GM10248 (cell line): ENCODE measurements at regions of chr12 and their contacts with region 1.

Region 1: GRCh38 chr12:105382771-105383622 is 52.5 kb downstream of the C12orf75 start:
- DNase-seq: peak; percentile 67
- CTCF ChIP-seq: peak; percentile 61

Region 2: DNA sequence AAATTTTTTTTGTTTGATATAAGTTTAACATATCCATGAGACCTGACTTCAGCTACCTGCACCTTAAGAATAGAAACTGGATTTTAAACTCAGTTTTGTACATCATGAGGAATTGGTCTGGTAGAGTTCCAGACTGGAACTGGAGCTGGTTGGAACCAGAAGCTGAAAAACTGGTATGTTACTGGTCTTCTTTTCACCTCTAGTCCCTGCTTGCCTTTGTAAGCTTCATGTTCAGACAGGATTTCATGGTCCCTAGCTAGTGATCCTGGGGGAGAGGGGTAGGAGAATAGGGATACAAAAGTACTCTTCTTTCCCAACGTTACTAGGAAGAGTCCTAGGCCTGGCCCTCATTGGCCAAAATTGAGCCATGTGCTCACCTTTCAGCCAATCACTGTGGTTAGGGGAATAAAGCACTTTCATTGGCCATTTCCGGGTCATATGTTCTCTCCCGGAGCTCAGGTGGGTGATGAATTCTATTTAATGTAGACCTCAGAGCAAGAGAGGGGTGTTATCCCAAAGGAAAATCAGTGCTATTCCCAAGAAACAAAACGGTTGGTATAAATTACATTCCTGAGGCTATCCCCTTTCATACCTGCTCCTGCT is 110.1 kb before region 1 on chr12:
- CTCF ChIA-PET with region 1: interaction called, 12 read pairs
- POLR2A ChIA-PET with region 1: no interaction called
- DNase-seq: no peak
- CTCF ChIP-seq: no peak

Region 3: GRCh38 chr12:105319691-105320209 is 63.2 kb before region 1 on chr12:
- CTCF ChIA-PET with region 1: interaction called, 19 read pairs
- POLR2A ChIA-PET with region 1: no interaction called
- DNase-seq: no peak
- CTCF ChIP-seq: no peak

Region 4: DNA sequence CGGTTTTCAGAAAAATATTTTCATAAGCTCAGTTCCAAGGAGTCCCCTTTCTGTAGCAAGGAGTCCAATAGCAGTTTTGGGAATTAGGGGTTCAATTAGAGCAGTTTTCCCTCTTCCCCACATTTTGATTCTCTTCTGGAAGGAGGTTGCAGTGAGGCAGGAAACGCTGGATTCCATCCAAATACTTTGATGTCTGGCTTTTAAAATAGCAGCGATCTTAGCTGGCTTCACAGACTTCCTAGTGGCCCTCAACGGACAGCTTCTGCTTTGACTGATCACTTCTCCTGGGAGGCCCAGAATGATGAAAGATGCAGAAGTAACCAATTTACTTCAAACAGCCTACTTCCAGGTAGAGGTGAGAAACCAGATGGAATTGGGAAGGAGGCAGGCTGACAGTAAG is 10.6 kb after region 1 on chr12:
- CTCF ChIA-PET with region 1: interaction called, 28 read pairs
- POLR2A ChIA-PET with region 1: no interaction called
- DNase-seq: no peak
- CTCF ChIP-seq: no peak